Activated B cell treated with CpG ODN at 0.5 μM for 24 hours (primary cell): ENCODE measurements at regions of chr13 and their contacts with region 1.

Region 1: DNA sequence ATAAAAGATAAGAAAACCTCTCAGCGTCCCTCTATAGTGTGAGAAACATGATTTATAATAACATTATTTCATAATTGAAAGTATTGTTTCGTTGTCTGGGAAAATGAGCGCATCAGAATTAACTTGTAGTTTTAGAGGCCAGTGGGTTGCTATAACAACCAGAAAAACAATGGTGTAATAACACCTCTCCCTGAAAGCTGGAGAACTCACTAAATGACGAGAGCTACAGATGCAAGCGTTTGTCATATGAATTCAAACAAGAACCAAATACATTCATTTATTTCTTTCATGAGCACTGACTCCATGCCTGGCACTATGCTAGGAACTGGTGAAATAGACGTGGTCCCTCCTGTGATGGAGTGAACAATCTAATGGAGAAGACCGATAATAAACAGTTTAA is 16.3 kb downstream of the KBTBD7 start:
- DNase-seq: no peak
- ATAC-seq: no peak
- H3K4me3 Mint-ChIP-seq: no peak overlapping the region
- H3K27ac Mint-ChIP-seq: no peak overlapping the region
- H3K4me1 Mint-ChIP-seq: no peaks in the 10 kb centered on the region
- H3K27me3 Mint-ChIP-seq: no peaks in the 10 kb centered on the region
- CTCF ChIP-seq: no peak

Region 2: GRCh38 chr13:41148419-41149283 is 29.4 kb before region 1 on chr13:
- CTCF ChIA-PET with region 1: no interaction called
- POLR2A ChIA-PET with region 1: no interaction called
- intact Hi-C with region 1: no loop called
- DNase-seq: no peak
- ATAC-seq: no peak
- H3K4me3 Mint-ChIP-seq: no peak overlapping the region
- H3K27ac Mint-ChIP-seq: no peak overlapping the region
- H3K4me1 Mint-ChIP-seq: no peaks in the 10 kb centered on the region
- H3K27me3 Mint-ChIP-seq: no peaks in the 10 kb centered on the region
- CTCF ChIP-seq: no peak

Region 3: DNA sequence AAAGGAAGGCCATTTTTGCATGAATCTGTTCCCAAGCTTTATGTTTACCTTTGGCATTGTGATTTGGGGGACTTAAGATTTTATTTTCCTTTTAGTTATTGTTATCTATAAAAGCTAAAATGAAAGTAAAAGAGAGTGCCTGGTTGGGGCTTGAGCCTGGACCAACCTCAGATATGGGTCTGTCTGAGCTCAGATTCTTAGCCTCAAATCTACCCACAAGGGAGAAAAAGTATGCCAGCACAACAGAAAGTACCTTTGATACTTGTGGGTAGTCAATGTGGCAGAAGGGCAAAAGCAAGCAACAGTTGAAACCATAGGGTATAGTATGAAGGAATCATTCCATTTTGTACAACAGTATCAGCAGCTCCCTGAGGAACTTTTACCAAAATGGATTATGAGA is 18.9 kb before region 1 on chr13:
- CTCF ChIA-PET with region 1: no interaction called
- POLR2A ChIA-PET with region 1: no interaction called
- intact Hi-C with region 1: loop called (anchors 2 kb)
- DNase-seq: no peak
- ATAC-seq: no peak
- H3K4me3 Mint-ChIP-seq: no peak overlapping the region
- H3K27ac Mint-ChIP-seq: no peak overlapping the region
- H3K4me1 Mint-ChIP-seq: no peaks in the 10 kb centered on the region
- H3K27me3 Mint-ChIP-seq: no peaks in the 10 kb centered on the region
- CTCF ChIP-seq: no peak